GM12878 (cell line): ENCODE measurements at regions of chr7 and their contacts with region 1.

Region 1: DNA sequence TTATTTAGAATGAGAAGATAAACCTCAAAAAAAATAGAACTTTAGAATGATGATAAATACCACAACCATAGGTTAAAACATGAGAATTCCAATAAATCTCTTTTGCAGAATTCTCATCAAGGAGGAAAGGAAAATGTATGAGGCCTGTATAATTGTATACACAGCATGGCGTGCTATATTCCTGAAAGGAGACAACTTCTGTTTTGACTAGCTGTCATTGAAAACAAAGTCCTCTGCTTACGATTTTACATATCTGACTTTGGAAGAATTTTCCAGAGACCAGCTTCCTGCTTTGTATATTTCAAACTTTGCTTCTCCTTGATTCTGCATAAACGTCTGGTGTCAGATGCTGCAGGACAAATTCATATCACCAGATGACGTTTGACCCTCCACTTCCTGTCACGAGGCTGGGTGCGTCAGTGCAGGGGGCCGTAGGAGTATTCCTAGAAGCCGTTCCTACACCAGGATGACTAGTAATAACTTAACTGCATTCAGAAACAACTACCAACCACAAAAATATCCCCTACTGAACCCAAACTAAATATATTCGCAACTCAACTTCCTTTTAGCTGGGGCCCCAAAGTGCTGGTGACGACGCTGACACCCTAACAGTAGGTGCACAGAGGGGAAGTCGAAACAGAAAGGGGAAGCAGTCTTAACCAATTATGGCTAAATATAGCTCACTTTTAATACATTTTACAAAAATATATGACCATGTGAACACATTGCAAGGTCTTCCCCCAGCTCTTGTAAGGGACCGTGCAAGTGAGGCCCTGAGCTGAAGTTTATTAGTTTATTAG is 178.6 kb upstream of the INHBA start:
- DNase-seq: peak; percentile 98
- ATAC-seq: peak; percentile 90
- H3K4me3 ChIP-seq: peak overlapping the region; percentile 22; the same call in 1 of the 2 replicates
- H3K27ac ChIP-seq: peak overlapping the region; percentile 92
- H3K4me1 ChIP-seq: peaks cover 32% of the 10 kb centered on the region
- H3K27me3 ChIP-seq: no peaks in the 10 kb centered on the region
- CTCF ChIP-seq: no peak
- EP300 ChIP-seq: peak; percentile 99 to 100
- POLR2A ChIP-seq: no peak
- RAD21 ChIP-seq: no peak

Region 2: DNA sequence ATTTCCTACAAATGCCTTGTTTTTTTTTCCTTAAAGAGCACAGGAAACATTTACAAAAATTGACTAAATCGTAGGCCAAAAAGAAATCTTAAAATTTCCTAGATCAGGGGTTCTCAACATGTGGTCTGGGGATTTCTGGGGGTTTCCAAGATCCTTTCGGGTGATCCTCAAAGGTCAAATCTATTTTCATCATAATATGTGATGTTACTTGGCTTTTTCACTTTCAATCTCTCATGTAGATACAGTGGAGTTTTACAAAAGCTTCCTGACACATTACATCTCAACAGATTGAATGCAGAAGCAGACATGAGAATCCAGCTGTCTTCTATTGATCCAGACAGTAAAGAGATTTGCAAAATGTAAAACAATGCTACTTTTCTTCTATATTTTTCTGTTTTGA is 675.9 kb before region 1 on chr7:
- CTCF ChIA-PET with region 1: no interaction called
- POLR2A ChIA-PET with region 1: no interaction called
- RAD21 ChIA-PET with region 1: no interaction called
- SMC1A ChIA-PET with region 1: no interaction called
- in situ Hi-C with region 1: no loop called
- intact Hi-C with region 1: loop called (anchors 10 kb)
- DNase-seq: peak; percentile 36
- ATAC-seq: peak; percentile 82
- H3K4me3 ChIP-seq: no peak overlapping the region
- H3K27ac ChIP-seq: peak overlapping the region; percentile 50; the same call in 1 of the 2 replicates
- H3K4me1 ChIP-seq: no peaks in the 10 kb centered on the region
- H3K27me3 ChIP-seq: no peaks in the 10 kb centered on the region
- CTCF ChIP-seq: no peak
- EP300 ChIP-seq: no peak; a peak in 1 of 4 replicates
- POLR2A ChIP-seq: no peak
- RAD21 ChIP-seq: no peak

Region 3: GRCh38 chr7:41731492-41732435 is 149.8 kb before region 1 on chr7:
- CTCF ChIA-PET with region 1: interaction called, 4 read pairs
- POLR2A ChIA-PET with region 1: no interaction called
- RAD21 ChIA-PET with region 1: interaction called, 4 read pairs
- SMC1A ChIA-PET with region 1: interaction called, 3 read pairs
- in situ Hi-C with region 1: loop called (anchors 5 kb)
- intact Hi-C with region 1: loop called (anchors 5 kb)
- DNase-seq: peak; percentile 66
- ATAC-seq: peak; percentile 95
- H3K4me3 ChIP-seq: no peak overlapping the region
- H3K27ac ChIP-seq: no peak overlapping the region
- H3K4me1 ChIP-seq: peaks cover 7% of the 10 kb centered on the region
- H3K27me3 ChIP-seq: no peaks in the 10 kb centered on the region
- CTCF ChIP-seq: peak in 1 of 3 experiments; percentile 10; a peak in 1 of 6 replicates
- EP300 ChIP-seq: peak in 1 of 2 experiments; percentile 47; a peak in 2 of 4 replicates
- POLR2A ChIP-seq: no peak
- RAD21 ChIP-seq: 0 out of 2 replicates have a peak, but pooled peaks have one; percentile 16

Region 4: DNA sequence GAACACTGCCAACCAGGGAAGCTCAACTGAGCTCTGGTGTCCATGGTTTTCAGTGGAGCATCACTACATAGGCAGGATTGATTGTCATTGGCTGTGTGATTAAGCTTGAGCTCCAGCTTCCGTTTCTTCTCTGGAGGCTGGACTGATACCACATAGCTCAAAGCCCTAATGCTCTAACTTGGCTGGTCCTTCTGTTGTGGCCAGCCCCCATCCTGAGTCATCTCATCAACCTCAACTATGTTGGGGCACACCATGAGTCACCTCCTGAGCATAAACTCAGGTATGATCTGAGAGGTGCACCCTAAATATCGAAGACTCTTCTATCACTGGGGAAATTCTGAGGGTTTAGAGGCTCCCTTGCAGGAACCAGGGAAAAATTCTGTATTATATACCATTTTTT is 64.1 kb before region 1 on chr7:
- CTCF ChIA-PET with region 1: interaction called, 4 read pairs
- POLR2A ChIA-PET with region 1: interaction called, 5 read pairs
- RAD21 ChIA-PET with region 1: interaction called, 16 read pairs
- SMC1A ChIA-PET with region 1: interaction called, 33 read pairs
- in situ Hi-C with region 1: no loop called
- intact Hi-C with region 1: loop called (anchors 5 kb)
- DNase-seq: no peak
- ATAC-seq: peak; percentile 87
- H3K4me3 ChIP-seq: no peak overlapping the region
- H3K27ac ChIP-seq: no peak overlapping the region
- H3K4me1 ChIP-seq: peaks cover 15% of the 10 kb centered on the region
- H3K27me3 ChIP-seq: no peaks in the 10 kb centered on the region
- CTCF ChIP-seq: no peak
- EP300 ChIP-seq: no peak
- POLR2A ChIP-seq: no peak
- RAD21 ChIP-seq: no peak

Region 5: GRCh38 chr7:41900532-41900931 is 19.0 kb after region 1 on chr7:
- CTCF ChIA-PET with region 1: no interaction called
- POLR2A ChIA-PET with region 1: interaction called, 3 read pairs
- RAD21 ChIA-PET with region 1: interaction called, 11 read pairs
- SMC1A ChIA-PET with region 1: interaction called, 7 read pairs
- in situ Hi-C with region 1: no loop called
- intact Hi-C with region 1: no loop called
- DNase-seq: no peak
- ATAC-seq: peak; percentile 64; the same call in 2 of the 3 replicates
- H3K4me3 ChIP-seq: no peak overlapping the region
- H3K27ac ChIP-seq: no peak overlapping the region
- H3K4me1 ChIP-seq: no peaks in the 10 kb centered on the region
- H3K27me3 ChIP-seq: no peaks in the 10 kb centered on the region
- CTCF ChIP-seq: no peak
- EP300 ChIP-seq: no peak
- POLR2A ChIP-seq: no peak
- RAD21 ChIP-seq: no peak

Region 6: DNA sequence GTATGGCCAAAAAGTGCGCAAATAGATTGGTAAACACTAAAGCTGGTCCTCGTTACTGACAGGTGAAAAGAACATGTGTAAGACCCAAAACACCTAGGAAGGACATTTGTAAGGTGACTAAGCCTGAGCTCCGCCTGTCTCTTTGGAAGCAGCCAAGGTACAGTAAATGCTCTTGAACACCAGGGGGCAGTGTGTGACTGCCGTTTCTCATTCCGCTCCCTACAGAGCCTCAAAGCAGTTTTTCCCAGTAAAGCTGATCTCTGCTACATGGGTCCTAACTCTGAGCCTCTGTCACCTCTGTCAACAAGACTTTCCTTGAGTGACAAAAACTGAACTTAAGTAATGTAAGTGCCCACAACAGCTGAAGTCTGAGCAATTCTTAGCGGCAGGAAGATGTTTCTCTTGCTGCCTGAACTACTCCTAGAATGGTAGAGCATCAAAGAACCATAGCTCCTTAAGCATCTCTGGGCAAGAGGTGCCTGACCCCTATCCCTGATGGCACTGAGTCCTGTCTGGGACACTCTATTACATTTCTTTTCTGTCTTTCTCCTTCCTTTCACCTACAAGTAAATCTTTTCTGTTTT is 59.3 kb after region 1 on chr7:
- CTCF ChIA-PET with region 1: interaction called, 16 read pairs
- POLR2A ChIA-PET with region 1: interaction called, 3 read pairs
- RAD21 ChIA-PET with region 1: interaction called, 17 read pairs
- SMC1A ChIA-PET with region 1: interaction called, 8 read pairs
- in situ Hi-C with region 1: no loop called
- intact Hi-C with region 1: loop called (anchors 2 kb)
- DNase-seq: peak; percentile 25
- ATAC-seq: peak; percentile 87
- H3K4me3 ChIP-seq: no peak overlapping the region
- H3K27ac ChIP-seq: no peak overlapping the region
- H3K4me1 ChIP-seq: no peaks in the 10 kb centered on the region
- H3K27me3 ChIP-seq: peaks cover 0 to 2% of the 10 kb centered on the region in 2 experiments; a peak in 1 of 4 replicates
- CTCF ChIP-seq: peak; percentile 78 to 87 (median 86)
- EP300 ChIP-seq: no peak
- POLR2A ChIP-seq: no peak
- RAD21 ChIP-seq: peak; percentile 77

Region 7: GRCh38 chr7:41955893-41956675 is 74.6 kb after region 1 on chr7:
- CTCF ChIA-PET with region 1: no interaction called
- POLR2A ChIA-PET with region 1: no interaction called
- RAD21 ChIA-PET with region 1: no interaction called
- SMC1A ChIA-PET with region 1: no interaction called
- in situ Hi-C with region 1: no loop called
- intact Hi-C with region 1: no loop called
- DNase-seq: no peak
- ATAC-seq: no peak
- H3K4me3 ChIP-seq: no peak overlapping the region
- H3K27ac ChIP-seq: no peak overlapping the region
- H3K4me1 ChIP-seq: no peaks in the 10 kb centered on the region
- H3K27me3 ChIP-seq: 0 out of 4 replicates have a peak, but pooled peaks cover 0 to 2% of the 10 kb centered on the region in 2 experiments
- CTCF ChIP-seq: no peak
- EP300 ChIP-seq: no peak
- POLR2A ChIP-seq: no peak
- RAD21 ChIP-seq: no peak